Activated CD4-positive, alpha-beta T cell treated with anti-CD3 and anti-CD28 coated beads for 36 hours (primary cell): ENCODE measurements at regions of chr4 and their contacts with region 1.

Region 1: GRCh38 chr4:52659001-52659721 is at the start of gene USP46:
- DNase-seq: peak; percentile 74
- ATAC-seq: peak; percentile 86
- H3K4me3 Mint-ChIP-seq: peak within 1 kb of the TSS; percentile 80
- H3K27ac Mint-ChIP-seq: peak within 1 kb of the TSS; percentile 78
- H3K4me1 Mint-ChIP-seq: peaks cover 18% of the 10 kb centered on the region
- H3K27me3 Mint-ChIP-seq: peaks cover 12% of the 10 kb centered on the region
- total RNA-seq, gene USP46: 4.3 to 5.4 TPM

Region 2: GRCh38 chr4:52560844-52561280 is 98.3 kb before region 1 on chr4:
- CTCF ChIA-PET with region 1: no interaction called
- POLR2A ChIA-PET with region 1: no interaction called
- intact Hi-C with region 1: no loop called
- DNase-seq: no peak
- ATAC-seq: no peak
- H3K4me3 Mint-ChIP-seq: no peak overlapping the region
- H3K27ac Mint-ChIP-seq: no peak overlapping the region
- H3K4me1 Mint-ChIP-seq: no peaks in the 10 kb centered on the region
- H3K27me3 Mint-ChIP-seq: peaks cover 12% of the 10 kb centered on the region

Region 3: GRCh38 chr4:52721968-52722815 is 63.0 kb after region 1 on chr4:
- CTCF ChIA-PET with region 1: no interaction called
- POLR2A ChIA-PET with region 1: no interaction called
- intact Hi-C with region 1: loop called in 1 of 2 experiments (anchors 1 kb)
- DNase-seq: peak; percentile 93
- ATAC-seq: peak; percentile 99
- H3K4me3 Mint-ChIP-seq: peak overlapping the region; percentile 70
- H3K27ac Mint-ChIP-seq: peak overlapping the region; percentile 70
- H3K4me1 Mint-ChIP-seq: peaks cover 7% of the 10 kb centered on the region
- H3K27me3 Mint-ChIP-seq: no peaks in the 10 kb centered on the region

Region 4: GRCh38 chr4:52799813-52800212 is 140.7 kb after region 1 on chr4:
- CTCF ChIA-PET with region 1: no interaction called
- POLR2A ChIA-PET with region 1: no interaction called
- intact Hi-C with region 1: no loop called
- DNase-seq: no peak
- ATAC-seq: no peak
- H3K4me3 Mint-ChIP-seq: no peak overlapping the region
- H3K27ac Mint-ChIP-seq: no peak overlapping the region
- H3K4me1 Mint-ChIP-seq: no peaks in the 10 kb centered on the region
- H3K27me3 Mint-ChIP-seq: peaks cover 6% of the 10 kb centered on the region